ENCODE measurements at regions of chr10 and their contacts with region 1.

Region 1: GRCh38 chr10:69901628-69902505 is 100.2 kb downstream of the COL13A1 start:
- DNase-seq: no peak
- H3K4me3 ChIP-seq: no peak overlapping the region
- CTCF ChIP-seq: peak; percentile 84

Region 2: GRCh38 chr10:69757206-69757552 is 144.7 kb before region 1 on chr10:
- CTCF ChIA-PET with region 1: no interaction called
- POLR2A ChIA-PET with region 1: no interaction called
- DNase-seq: no peak
- H3K4me3 ChIP-seq: no peak overlapping the region
- CTCF ChIP-seq: no peak

Region 3: DNA sequence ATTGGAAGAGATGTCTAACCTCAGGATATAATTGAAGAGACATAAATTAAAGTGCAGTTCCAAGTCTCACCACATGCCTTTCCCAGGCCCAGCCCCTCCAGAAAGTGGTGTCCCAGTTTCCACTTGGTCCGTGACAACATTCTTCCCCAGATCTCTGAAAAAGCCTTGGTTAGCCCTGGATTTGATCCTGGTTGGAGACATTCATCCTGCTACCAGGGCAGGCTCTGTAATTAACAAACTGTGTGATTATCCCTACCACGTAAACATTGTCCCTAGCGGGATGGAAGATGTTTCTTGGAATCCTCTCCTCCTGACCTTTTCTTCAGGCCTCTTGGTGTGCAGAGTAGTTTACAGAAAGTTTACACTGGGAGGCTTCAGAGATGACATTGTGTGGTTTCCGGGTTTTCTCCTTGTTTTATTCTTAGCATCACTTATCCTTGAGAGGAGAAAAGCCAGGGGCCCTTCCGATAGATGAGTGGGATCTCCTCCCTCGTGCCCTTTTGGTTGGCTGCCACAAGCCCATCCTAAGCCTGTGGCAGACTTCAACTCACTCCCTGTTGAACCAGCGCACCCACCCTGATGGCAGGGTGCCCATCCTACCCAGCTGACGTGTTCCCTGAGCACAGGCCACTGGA is 16.4 kb before region 1 on chr10:
- CTCF ChIA-PET with region 1: interaction called, 28 read pairs
- POLR2A ChIA-PET with region 1: no interaction called
- DNase-seq: no peak
- H3K4me3 ChIP-seq: no peak overlapping the region
- CTCF ChIP-seq: peak; percentile 19

Measured in AG04449 (cell line).